Endothelial cell of umbilical vein (primary cell): ENCODE measurements at regions of chr3 and their contacts with region 1.

Region 1: GRCh38 chr3:120182724-120183524 is 88.7 kb upstream of the GSK3B start:
- DNase-seq: peak; percentile 55
- H3K4me3 ChIP-seq: no peak overlapping the region
- H3K27ac ChIP-seq: no peak overlapping the region
- H3K4me1 ChIP-seq: peaks cover 2% of the 10 kb centered on the region
- H3K27me3 ChIP-seq: no peaks in the 10 kb centered on the region
- CTCF ChIP-seq: peak; percentile 15 to 36
- POLR2A ChIP-seq: no peak

Region 2: DNA sequence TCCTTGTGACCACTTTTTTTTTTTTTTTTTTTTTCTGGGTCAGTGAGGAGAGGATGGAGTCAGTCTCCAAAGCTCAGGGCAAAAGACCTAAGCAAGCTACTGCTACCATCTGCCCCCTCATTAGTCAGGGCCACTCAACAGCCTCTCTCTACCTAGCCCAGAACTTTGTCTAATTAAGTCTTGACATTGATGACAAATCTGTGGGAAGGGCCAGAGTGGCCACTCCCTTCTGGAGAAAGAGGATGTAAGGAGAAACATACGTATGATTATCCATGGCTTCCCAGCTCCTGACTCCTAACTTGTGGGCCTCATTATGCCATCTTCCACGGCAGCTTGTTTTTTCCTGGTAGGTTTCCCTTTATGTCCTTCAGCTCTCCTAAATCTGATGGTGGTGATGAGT is 363.1 kb before region 1 on chr3:
- CTCF ChIA-PET with region 1: interaction called, 4 read pairs
- POLR2A ChIA-PET with region 1: no interaction called
- dilution Hi-C with region 1: no loop called
- intact Hi-C with region 1: loop called (anchors 1 kb)
- DNase-seq: no peak
- H3K4me3 ChIP-seq: no peak overlapping the region
- H3K27ac ChIP-seq: no peak overlapping the region
- H3K4me1 ChIP-seq: no peaks in the 10 kb centered on the region
- H3K27me3 ChIP-seq: no peaks in the 10 kb centered on the region
- CTCF ChIP-seq: no peak
- POLR2A ChIP-seq: no peak

Region 3: GRCh38 chr3:119861681-119862080 is 321.2 kb before region 1 on chr3:
- CTCF ChIA-PET with region 1: no interaction called
- POLR2A ChIA-PET with region 1: no interaction called
- dilution Hi-C with region 1: no loop called
- intact Hi-C with region 1: no loop called
- DNase-seq: no peak
- H3K4me3 ChIP-seq: no peak overlapping the region
- H3K27ac ChIP-seq: no peak overlapping the region
- H3K4me1 ChIP-seq: no peaks in the 10 kb centered on the region
- H3K27me3 ChIP-seq: no peaks in the 10 kb centered on the region
- CTCF ChIP-seq: no peak
- POLR2A ChIP-seq: no peak